Right ventricle myocardium inferior (tissue), 1 donor: ENCODE measurements at regions of chr7 and their contacts with region 1.

Region 1: GRCh38 chr7:26061688-26062150 is 90.3 kb upstream of the NFE2L3 start:
- DNase-seq: no peak
- ATAC-seq: peak; percentile 48

Region 2: GRCh38 chr7:25862260-25863037 is 199.3 kb before region 1 on chr7:
- intact Hi-C with region 1: no loop called
- DNase-seq: peak; percentile 88
- ATAC-seq: peak; percentile 86

Region 3: DNA sequence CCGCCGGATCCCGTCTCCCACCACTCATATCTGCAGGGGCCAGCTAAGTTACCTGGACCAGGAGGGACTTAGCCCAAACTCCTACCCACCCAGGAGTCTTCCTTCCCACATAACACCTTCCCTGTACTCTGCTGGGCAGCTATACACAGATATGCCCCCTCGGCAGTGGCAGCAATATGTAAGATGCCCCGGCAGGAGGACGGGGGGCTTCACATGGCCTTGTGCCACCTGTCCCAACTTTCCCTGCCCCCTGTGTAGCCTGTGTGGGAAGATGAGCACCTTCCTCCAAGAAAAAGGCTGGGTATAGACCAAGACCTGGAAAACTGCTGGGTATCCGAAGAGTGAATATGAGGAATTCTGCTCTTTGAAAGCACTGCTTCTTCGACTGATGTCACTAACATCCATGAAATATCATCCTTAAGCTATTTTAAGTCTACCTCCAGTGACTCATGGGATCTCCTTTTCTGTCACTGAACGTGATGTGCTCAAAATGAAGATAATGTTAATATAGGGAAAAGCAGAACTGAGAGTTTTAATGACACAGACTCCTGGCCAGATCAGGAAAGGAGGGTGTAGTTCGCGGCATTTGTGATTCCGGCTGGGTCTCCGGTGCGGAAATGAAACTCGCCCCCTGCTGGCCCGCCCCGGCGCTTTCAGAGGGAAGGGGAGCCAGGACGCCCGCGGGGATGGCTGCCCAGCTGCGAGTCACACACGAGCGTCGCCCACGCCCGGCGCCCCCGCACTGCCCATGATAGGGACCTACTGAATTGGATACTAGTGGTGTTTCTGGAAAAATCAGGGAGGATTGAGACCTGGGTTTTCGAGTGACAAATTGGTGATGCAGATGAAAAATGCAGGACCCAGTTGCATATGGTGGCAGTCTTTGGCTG is 166.6 kb before region 1 on chr7:
- intact Hi-C with region 1: loop called (anchors 1 kb)
- DNase-seq: peak; percentile 76
- ATAC-seq: peak; percentile 59